Activated CD4-positive, alpha-beta T cell treated with anti-CD3 and anti-CD28 coated beads, Interleukin-2, amount 10 ng/mL, durations not matched to agents 24 days and 14 days (primary cell): ENCODE measurements at regions of chr10 and their contacts with region 1.

Region 1: DNA sequence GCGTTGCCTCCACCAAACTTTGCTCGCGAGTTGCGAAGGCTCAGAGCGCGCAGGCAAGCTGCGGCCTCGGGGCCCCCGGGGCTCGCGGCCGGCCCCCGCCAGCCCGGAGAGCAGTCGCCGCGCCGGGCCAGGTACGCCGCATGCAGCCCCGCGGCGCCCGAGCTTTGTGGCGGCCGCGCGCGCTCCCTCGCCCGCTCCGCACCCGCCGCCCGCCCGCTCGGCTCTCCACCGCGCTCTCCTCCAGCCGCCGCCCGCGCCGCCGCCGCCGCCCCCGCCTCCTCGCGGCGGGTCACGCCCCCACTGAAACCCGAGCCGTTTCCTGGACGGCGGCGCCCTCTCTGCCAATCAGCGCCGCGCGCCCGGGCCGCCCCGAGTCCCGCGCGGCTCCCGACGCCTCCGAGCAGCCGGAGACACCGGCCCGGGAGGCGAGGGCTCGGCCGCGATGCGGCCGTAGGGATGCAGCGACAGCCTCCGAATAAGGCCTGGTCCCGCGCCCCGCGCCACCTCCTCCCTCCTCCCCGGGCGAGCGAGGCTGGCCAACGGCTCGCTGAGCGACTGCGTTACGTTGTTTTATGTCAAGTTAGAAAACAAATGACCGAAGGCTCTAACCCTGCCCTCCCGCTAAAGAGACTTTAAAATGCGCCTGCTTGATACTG is at the start of gene FGFR2:
- DNase-seq: peak; percentile 80
- H3K4me3 Mint-ChIP-seq: no peak within 1 kb of the TSS
- H3K27ac Mint-ChIP-seq: no peak within 1 kb of the TSS
- H3K4me1 Mint-ChIP-seq: peaks cover 6% of the 10 kb centered on the region
- H3K27me3 Mint-ChIP-seq: peaks cover 53% of the 10 kb centered on the region
- total RNA-seq, gene FGFR2: not detected in 2 replicates

Region 2: GRCh38 chr10:121138112-121138860 is 460.0 kb before region 1 on chr10:
- intact Hi-C with region 1: no loop called
- DNase-seq: no peak
- H3K4me3 Mint-ChIP-seq: no peak overlapping the region
- H3K27ac Mint-ChIP-seq: no peak overlapping the region
- H3K4me1 Mint-ChIP-seq: no peaks in the 10 kb centered on the region
- H3K27me3 Mint-ChIP-seq: no peaks in the 10 kb centered on the region

Region 3: GRCh38 chr10:123147635-123148413 is 1549.5 kb after region 1 on chr10 and contains the start of gene HMX2:
- intact Hi-C with region 1: loop called (anchors 5 kb)
- DNase-seq: peak; percentile 77
- H3K4me3 Mint-ChIP-seq: peak within 1 kb of the TSS; percentile 53
- H3K27ac Mint-ChIP-seq: peak within 1 kb of the TSS; percentile 73
- H3K4me1 Mint-ChIP-seq: peaks cover 29% of the 10 kb centered on the region
- H3K27me3 Mint-ChIP-seq: peaks cover 67% of the 10 kb centered on the region
- total RNA-seq, gene HMX2: not detected in 2 replicates